Right ventricle myocardium inferior (tissue), 1 donor: ENCODE measurements at regions of chr20 and their contacts with region 1.

Region 1: GRCh38 chr20:37288091-37288490 is 1.4 kb upstream of the MANBAL start:
- DNase-seq: no peak
- ATAC-seq: peak; percentile 38

Region 2: DNA sequence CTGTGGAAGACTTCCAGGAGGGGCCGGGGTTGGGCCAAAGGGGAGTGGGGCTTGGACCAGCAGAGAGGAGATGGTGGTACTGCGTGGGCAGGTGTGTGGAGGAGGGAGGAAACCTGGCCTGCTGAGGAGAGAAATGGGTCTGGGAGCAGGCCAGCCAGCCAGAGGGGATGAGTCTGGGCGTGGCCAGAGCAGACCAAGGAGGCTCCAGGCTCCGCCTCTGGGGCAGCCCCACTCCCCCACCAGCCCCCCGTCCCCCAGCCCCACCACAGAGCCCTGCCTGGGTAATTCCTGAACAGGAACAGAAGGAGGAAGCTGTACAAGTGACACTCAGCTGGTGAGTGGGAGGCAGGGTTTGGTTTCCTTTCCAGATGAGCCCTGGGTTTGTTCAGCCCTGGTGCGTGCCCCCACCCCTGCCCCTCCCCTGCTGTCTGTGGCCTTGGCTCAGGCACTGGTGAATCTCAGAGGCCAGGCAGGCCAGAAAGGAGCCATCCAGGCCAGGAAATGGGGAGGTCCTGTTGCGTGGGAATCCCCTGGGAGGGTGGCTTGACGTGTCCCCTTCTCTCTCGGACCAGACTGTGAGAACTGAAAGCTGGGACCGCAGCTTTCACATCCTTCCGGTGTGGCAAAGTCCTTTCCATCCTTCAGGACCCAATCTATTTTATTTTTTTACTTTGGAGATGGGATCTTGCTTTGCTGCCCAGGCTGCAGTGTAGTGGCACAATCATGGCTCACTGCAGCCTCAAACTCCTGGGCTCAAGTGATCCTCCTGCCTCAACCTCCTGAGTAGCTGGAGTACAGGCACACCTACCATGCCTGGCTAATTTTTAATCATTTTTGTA is 48.5 kb after region 1 on chr20:
- intact Hi-C with region 1: loop called (anchors 5 kb)
- DNase-seq: no peak
- ATAC-seq: peak; percentile 69

Region 3: DNA sequence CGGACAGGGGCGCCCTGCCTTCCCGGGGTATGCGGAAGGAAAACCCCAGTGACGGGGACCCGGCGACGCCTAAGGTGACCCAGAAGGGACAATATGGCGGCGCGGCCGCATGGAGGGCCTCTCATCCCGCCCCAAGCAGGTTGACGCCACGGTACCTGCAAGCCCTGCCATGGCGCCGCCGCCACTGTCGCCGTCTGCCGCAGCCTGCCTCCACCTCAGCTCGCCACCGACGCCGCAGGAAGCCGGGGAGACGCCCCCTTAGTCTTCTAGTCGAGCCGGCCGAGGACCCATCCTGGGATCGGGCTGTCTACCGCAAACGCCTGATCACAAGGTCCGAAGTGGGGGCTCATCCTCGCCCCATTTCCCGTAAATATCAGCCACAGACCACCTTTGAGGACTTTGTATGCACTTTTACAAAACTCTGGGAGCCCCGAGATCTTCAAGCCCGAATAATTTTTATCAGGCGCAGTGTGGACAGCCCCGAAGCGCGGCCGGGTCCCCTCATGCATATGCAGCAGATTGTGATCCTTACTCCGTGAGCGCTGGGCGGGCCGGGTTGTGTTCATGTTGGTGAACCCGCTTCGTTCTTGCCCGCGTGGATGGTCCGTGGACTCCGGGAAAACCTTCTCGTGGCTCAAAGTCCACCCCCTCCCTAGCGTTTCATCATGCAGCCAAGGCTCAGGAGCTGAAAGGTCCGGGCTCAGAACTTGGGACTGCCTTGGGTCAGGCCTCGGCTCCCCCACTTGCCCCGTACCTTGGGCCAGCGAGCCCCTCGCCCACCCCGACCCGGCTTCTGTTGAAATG is 239.7 kb after region 1 on chr20 and contains the start of gene BLCAP:
- intact Hi-C with region 1: loop called (anchors 5 kb)
- DNase-seq: peak; percentile 96
- ATAC-seq: peak; percentile 95
- total RNA-seq, gene BLCAP: 92.1 TPM